Calu3 (cell line): ENCODE measurements at regions of chr13 and their contacts with region 1.

Region 1: GRCh38 chr13:51729866-51730546 is 74.0 kb downstream of the DHRS12 start:
- DNase-seq: peak; percentile 34
- H3K4me3 Mint-ChIP-seq: no peak overlapping the region
- H3K27ac Mint-ChIP-seq: no peak overlapping the region
- H3K4me1 Mint-ChIP-seq: peaks cover 10% of the 10 kb centered on the region
- H3K27me3 Mint-ChIP-seq: no peaks in the 10 kb centered on the region
- CTCF ChIP-seq: no peak

Region 2: GRCh38 chr13:51435002-51435578 is 294.9 kb before region 1 on chr13:
- CTCF ChIA-PET with region 1: interaction called, 3 read pairs
- intact Hi-C with region 1: loop called (anchors 5 kb)
- DNase-seq: no peak
- H3K4me3 Mint-ChIP-seq: no peak overlapping the region
- H3K27ac Mint-ChIP-seq: no peak overlapping the region
- H3K4me1 Mint-ChIP-seq: no peaks in the 10 kb centered on the region
- H3K27me3 Mint-ChIP-seq: no peaks in the 10 kb centered on the region
- CTCF ChIP-seq: no peak

Region 3: GRCh38 chr13:51583875-51584730 is 145.9 kb before region 1 on chr13 and contains the start of gene WDFY2:
- CTCF ChIA-PET with region 1: no interaction called
- intact Hi-C with region 1: loop called (anchors 2 kb)
- DNase-seq: peak; percentile 96
- H3K4me3 Mint-ChIP-seq: peak within 1 kb of the TSS; percentile 84
- H3K27ac Mint-ChIP-seq: peak within 1 kb of the TSS; percentile 60
- H3K4me1 Mint-ChIP-seq: peaks cover 13% of the 10 kb centered on the region
- H3K27me3 Mint-ChIP-seq: no peaks in the 10 kb centered on the region
- CTCF ChIP-seq: no peak
- total RNA-seq, gene WDFY2: 5.9 and 6.3 TPM in 2 replicates

Region 4: GRCh38 chr13:51674279-51674678 is 55.7 kb before region 1 on chr13:
- CTCF ChIA-PET with region 1: no interaction called
- intact Hi-C with region 1: loop called (anchors 5 kb)
- DNase-seq: peak; percentile 81
- H3K4me3 Mint-ChIP-seq: no peak overlapping the region
- H3K27ac Mint-ChIP-seq: peak overlapping the region; percentile 79
- H3K4me1 Mint-ChIP-seq: peaks cover 10% of the 10 kb centered on the region
- H3K27me3 Mint-ChIP-seq: no peaks in the 10 kb centered on the region
- CTCF ChIP-seq: no peak

Region 5: DNA sequence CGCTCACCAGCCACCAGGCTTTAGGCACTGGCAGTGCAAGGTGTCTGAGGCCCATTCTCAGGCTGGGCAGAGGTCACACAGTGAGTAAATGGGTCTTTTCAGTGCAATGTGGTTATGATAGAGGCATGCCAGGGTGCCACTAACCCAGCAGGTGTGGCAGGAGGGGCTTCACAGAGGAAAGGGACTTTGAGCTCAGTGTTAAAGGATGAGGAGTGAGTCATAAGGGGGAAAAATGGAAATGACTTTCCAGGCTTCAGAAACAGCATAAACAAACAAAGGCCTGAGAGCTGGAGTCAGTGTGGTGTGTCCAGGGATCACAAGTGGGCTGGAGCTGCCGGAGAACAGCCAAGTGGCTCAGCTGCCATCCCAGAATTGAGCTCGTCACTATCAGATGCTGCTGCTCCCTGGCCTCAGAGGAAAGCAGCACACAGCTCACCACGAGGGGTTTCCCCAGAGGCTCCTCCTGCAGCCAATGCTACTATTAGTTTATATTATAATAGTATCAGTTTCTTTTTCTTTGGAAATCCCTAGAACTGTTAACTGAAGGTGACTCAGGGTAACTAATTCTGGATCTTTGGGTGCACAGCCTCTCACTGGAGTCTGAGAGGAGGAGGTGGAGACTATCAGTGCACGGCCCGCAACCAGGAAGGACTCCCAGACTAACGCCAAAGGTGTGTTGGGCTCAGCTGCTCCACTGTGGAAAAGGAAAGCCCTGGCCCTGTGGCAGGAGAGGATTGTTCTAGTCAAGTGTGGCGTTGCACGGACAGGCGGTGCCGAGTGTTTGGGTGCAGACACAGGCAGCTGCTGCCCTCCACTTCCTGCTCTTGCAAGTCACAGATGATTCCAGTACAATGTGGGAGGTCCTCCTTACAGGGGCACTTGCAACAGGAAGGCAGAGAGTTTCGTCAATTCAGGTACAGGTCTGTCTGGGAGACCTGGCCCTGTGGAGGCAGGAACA is 34.5 kb after region 1 on chr13:
- CTCF ChIA-PET with region 1: no interaction called
- intact Hi-C with region 1: loop called (anchors 2 kb)
- DNase-seq: peak; percentile 40
- H3K4me3 Mint-ChIP-seq: peak overlapping the region; percentile 29
- H3K27ac Mint-ChIP-seq: peak overlapping the region; percentile 66
- H3K4me1 Mint-ChIP-seq: peaks cover 20% of the 10 kb centered on the region
- H3K27me3 Mint-ChIP-seq: no peaks in the 10 kb centered on the region
- CTCF ChIP-seq: no peak

Region 6: DNA sequence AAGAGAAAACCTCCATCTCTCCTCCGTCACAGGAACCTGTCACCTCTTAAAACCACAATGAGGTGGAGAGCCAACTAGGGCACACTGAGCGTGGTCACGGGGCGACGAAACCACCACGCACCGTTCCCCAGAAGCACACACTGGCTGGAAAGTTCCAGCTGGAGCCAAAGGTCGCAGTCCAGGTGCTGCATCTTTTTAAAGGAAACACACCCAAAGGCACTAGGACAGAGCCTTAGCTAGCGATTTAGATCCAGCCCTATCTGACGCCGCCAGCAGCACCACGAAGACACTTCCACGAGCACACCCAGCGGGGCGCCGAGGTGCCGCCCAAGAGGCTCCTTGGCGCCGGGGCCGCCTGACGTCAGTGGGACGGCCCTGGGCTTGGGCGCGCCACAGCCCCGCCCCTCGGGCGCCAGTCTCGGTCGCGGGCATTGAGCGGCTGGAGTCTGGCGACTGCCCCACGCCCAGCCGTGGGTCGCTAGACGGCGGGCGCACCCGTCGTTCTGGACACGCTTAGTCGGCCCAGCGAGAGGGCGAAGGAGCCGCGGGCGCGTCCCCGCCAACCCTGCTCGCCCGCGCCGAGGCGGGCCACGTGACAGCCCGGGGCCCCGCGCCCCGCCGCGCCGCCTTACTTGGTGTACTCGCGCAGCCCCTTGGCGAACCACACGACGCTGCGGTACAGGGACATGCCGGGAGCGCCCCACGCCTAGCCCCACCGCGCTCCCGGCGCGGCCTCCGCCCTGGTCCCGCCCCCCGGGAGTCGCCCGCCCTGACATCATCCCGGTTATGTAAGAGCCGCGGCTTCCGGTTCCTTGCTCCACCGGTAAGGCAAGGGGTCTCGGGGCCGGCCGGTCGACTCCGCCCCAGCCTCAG is 73.7 kb after region 1 on chr13 and contains the start of gene DHRS12:
- CTCF ChIA-PET with region 1: no interaction called
- intact Hi-C with region 1: loop called (anchors 5 kb)
- DNase-seq: peak; percentile 80
- H3K4me3 Mint-ChIP-seq: peak within 1 kb of the TSS; percentile 68
- H3K27ac Mint-ChIP-seq: peak within 1 kb of the TSS; percentile 60
- H3K4me1 Mint-ChIP-seq: peaks cover 10% of the 10 kb centered on the region
- H3K27me3 Mint-ChIP-seq: no peaks in the 10 kb centered on the region
- CTCF ChIP-seq: no peak
- total RNA-seq, gene DHRS12: 8.1 and 8.4 TPM in 2 replicates